Endothelial cell of umbilical vein (primary cell): ENCODE measurements at regions of chr2 and their contacts with region 1.

Region 1: GRCh38 chr2:113889471-113890252 is at the start of gene ACTR3:
- DNase-seq: peak; percentile 100
- H3K4me3 ChIP-seq: peak within 1 kb of the TSS; percentile 99 to 100 (median 99)
- H3K27ac ChIP-seq: peak within 1 kb of the TSS; percentile 83
- H3K4me1 ChIP-seq: peaks cover 47% of the 10 kb centered on the region
- H3K27me3 ChIP-seq: no peaks in the 10 kb centered on the region
- CTCF ChIP-seq: peak in 1 of 2 donors; percentile 9
- POLR2A ChIP-seq: peak; percentile 89
- total RNA-seq, gene ACTR3: 374 and 401 TPM in 2 replicates

Region 2: DNA sequence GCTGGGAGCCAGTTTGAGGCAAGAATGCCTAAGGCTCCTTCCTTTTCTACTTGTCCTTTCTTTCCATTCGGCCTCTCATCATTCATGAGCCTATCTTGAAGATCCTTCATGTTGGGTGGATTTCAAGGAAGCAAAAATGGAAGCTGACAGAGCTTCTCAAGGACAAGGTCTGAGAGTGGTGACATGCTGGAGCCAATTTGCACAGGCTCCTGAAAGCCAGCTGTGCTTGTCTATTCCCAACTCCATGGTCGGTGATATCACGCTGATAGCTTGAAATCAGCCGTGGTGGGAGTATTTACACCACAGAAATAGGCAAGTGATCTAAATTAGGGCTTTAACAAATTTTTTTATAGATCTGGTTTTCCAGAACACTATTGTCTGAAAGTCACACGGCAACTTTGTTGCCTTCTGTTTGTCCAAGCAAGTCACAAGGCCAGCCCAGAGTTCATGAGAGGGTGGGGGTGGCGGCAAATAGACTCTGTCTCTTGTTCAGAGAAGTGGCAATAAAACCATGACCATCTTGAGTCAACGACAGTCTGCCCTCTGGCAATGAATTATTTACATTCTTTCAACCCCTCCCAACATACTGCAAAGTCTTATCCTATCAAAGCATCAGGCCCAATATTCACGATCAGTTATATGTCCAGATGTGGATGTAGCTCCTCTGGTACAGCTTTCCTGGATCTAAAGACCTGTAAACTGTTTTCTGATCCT is 83.3 kb before region 1 on chr2:
- CTCF ChIA-PET with region 1: no interaction called
- POLR2A ChIA-PET with region 1: no interaction called
- dilution Hi-C with region 1: no loop called
- intact Hi-C with region 1: no loop called
- DNase-seq: no peak
- H3K4me3 ChIP-seq: no peak overlapping the region
- H3K27ac ChIP-seq: no peak overlapping the region
- H3K4me1 ChIP-seq: no peaks in the 10 kb centered on the region
- H3K27me3 ChIP-seq: peaks cover 5 to 11% of the 10 kb centered on the region in 2 experiments
- CTCF ChIP-seq: no peak
- POLR2A ChIP-seq: no peak

Region 3: DNA sequence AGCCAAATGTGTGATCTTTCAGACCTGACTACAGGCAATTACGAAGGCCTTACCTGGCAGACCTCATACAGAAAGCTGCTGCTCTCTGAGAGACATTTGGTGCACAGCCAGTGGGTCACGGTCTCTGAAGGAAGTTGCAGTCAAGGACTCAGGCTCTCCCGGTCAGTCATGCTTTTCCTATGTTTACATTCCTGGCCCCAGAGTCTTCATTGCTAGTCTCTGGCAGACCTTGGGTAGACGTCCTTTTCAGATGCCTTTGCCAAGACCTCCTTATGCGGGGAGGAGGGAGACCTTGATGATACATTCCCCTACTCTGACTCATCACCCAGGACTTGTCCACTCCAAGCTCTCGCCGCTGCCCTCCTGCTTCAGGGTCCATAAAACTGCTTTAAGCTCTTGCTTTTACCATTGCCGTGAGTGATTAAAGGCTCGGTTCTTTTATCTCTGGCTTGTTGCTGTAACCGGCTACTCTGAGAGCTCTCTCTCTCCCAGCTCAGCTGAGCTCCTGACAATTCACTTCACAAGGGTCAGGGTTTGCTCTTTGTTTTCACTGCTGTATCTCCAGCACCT is 71.2 kb before region 1 on chr2:
- CTCF ChIA-PET with region 1: no interaction called
- POLR2A ChIA-PET with region 1: interaction called, 4 read pairs
- dilution Hi-C with region 1: no loop called
- intact Hi-C with region 1: loop called (anchors 1 kb)
- DNase-seq: peak; percentile 81
- H3K4me3 ChIP-seq: no peak overlapping the region
- H3K27ac ChIP-seq: no peak overlapping the region
- H3K4me1 ChIP-seq: peaks cover 11% of the 10 kb centered on the region
- H3K27me3 ChIP-seq: no peaks in the 10 kb centered on the region
- CTCF ChIP-seq: no peak
- POLR2A ChIP-seq: no peak

Region 4: GRCh38 chr2:113842919-113843736 is 46.5 kb before region 1 on chr2:
- CTCF ChIA-PET with region 1: no interaction called
- POLR2A ChIA-PET with region 1: no interaction called
- dilution Hi-C with region 1: no loop called
- intact Hi-C with region 1: no loop called
- DNase-seq: no peak
- H3K4me3 ChIP-seq: no peak overlapping the region
- H3K27ac ChIP-seq: no peak overlapping the region
- H3K4me1 ChIP-seq: no peaks in the 10 kb centered on the region
- H3K27me3 ChIP-seq: peaks cover 1 to 4% of the 10 kb centered on the region in 2 experiments
- CTCF ChIP-seq: no peak
- POLR2A ChIP-seq: no peak

Region 5: DNA sequence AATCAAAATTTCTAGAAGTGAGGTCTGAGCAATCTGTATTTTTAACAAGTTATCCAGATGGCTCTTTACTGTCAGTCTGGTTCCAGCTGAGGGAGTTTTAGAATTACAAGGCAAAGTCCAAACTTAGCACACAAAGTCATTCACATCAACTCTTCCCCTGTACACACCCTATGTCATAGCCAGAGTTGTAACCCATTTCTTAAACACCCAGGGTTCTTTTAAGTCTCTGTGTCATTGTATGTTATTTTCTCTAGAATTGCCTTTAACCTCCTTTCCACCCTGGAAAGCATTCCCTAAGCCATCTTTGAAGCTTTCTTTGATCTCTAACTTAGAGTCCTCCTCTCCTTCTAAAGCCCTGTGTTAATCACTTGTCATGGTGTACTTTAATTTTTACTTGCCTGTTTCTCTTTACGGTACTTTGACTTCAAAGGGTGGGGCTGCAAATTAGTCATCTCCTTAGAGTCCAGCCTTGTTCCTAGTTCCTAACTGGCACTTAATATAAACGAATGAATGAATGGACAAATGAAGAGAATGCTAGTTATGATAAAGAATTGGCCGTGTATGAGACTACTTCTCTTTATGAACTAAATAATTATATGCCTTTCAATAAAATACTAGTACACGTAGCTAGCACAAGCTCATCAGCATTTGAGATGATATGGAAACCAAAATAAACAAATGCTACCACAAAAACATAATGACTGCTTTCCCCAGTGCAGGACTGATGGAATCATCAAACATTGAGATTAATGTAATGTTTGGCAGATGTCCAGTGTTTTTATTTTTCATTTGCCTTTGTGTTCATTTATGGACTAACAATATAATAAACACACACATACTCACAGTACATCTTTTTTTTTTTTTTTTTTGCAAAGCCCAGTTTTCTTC is 11.7 kb before region 1 on chr2:
- CTCF ChIA-PET with region 1: no interaction called
- POLR2A ChIA-PET with region 1: no interaction called
- dilution Hi-C with region 1: no loop called
- intact Hi-C with region 1: loop called (anchors 1 kb)
- DNase-seq: peak; percentile 36
- H3K4me3 ChIP-seq: no peak overlapping the region
- H3K27ac ChIP-seq: no peak overlapping the region
- H3K4me1 ChIP-seq: peaks cover 15% of the 10 kb centered on the region
- H3K27me3 ChIP-seq: no peaks in the 10 kb centered on the region
- CTCF ChIP-seq: no peak
- POLR2A ChIP-seq: no peak

Region 6: DNA sequence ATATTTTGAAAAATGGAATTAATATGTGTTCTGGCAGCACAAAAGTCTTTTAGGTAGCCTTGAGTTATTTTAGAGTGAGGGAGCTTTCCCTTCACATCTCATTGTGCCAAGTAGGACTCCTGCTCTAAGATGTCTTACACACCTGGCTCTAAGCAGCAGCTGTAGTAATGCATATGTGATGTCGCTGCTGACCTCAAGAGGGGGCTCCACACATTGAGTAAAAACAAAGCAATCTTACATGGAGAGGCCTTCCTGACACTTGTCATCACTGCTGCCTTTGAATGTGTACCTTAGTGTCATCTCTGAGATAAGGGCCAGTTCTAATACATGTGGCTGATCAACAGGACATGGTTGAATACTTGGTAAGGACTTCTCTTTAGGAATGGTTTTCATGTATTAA is 76.0 kb after region 1 on chr2:
- CTCF ChIA-PET with region 1: no interaction called
- POLR2A ChIA-PET with region 1: no interaction called
- dilution Hi-C with region 1: no loop called
- intact Hi-C with region 1: loop called (anchors 5 kb)
- DNase-seq: peak; percentile 66
- H3K4me3 ChIP-seq: no peak overlapping the region
- H3K27ac ChIP-seq: peak overlapping the region; percentile 49
- H3K4me1 ChIP-seq: peaks cover 15% of the 10 kb centered on the region
- H3K27me3 ChIP-seq: no peaks in the 10 kb centered on the region
- CTCF ChIP-seq: peak; percentile 51 to 56
- POLR2A ChIP-seq: peak; percentile 21

Region 7: GRCh38 chr2:113992090-113992489 is 102.4 kb after region 1 on chr2:
- CTCF ChIA-PET with region 1: no interaction called
- POLR2A ChIA-PET with region 1: no interaction called
- dilution Hi-C with region 1: no loop called
- intact Hi-C with region 1: no loop called
- DNase-seq: no peak
- H3K4me3 ChIP-seq: no peak overlapping the region
- H3K27ac ChIP-seq: no peak overlapping the region
- H3K4me1 ChIP-seq: no peaks in the 10 kb centered on the region
- H3K27me3 ChIP-seq: no peaks in the 10 kb centered on the region
- CTCF ChIP-seq: no peak
- POLR2A ChIP-seq: no peak